B cell (primary cell): ENCODE measurements at regions of chr4 and their contacts with region 1.

Region 1: GRCh38 chr4:147617173-147617840 is at the start of gene TMEM184C:
- DNase-seq: peak; percentile 97
- ATAC-seq: peak; percentile 97
- H3K4me3 ChIP-seq: peak within 1 kb of the TSS; percentile 72 to 92 (median 89)
- H3K4me3 Mint-ChIP-seq: peak within 1 kb of the TSS; percentile 92
- H3K27ac ChIP-seq: peak within 1 kb of the TSS; percentile 77 to 94
- H3K27ac Mint-ChIP-seq: peak within 1 kb of the TSS; percentile 92
- H3K4me1 ChIP-seq: peaks cover 19 to 27% of the 10 kb centered on the region in 2 donors
- H3K4me1 Mint-ChIP-seq: peaks cover 37% of the 10 kb centered on the region
- H3K27me3 ChIP-seq: peaks cover 0 to 4% (median 0%) of the 10 kb centered on the region in 4 experiments
- H3K27me3 Mint-ChIP-seq: peaks cover 8% of the 10 kb centered on the region
- CTCF ChIP-seq: no peak
- total RNA-seq, gene TMEM184C: 25.8 and 27.5 TPM in 2 replicates

Region 2: DNA sequence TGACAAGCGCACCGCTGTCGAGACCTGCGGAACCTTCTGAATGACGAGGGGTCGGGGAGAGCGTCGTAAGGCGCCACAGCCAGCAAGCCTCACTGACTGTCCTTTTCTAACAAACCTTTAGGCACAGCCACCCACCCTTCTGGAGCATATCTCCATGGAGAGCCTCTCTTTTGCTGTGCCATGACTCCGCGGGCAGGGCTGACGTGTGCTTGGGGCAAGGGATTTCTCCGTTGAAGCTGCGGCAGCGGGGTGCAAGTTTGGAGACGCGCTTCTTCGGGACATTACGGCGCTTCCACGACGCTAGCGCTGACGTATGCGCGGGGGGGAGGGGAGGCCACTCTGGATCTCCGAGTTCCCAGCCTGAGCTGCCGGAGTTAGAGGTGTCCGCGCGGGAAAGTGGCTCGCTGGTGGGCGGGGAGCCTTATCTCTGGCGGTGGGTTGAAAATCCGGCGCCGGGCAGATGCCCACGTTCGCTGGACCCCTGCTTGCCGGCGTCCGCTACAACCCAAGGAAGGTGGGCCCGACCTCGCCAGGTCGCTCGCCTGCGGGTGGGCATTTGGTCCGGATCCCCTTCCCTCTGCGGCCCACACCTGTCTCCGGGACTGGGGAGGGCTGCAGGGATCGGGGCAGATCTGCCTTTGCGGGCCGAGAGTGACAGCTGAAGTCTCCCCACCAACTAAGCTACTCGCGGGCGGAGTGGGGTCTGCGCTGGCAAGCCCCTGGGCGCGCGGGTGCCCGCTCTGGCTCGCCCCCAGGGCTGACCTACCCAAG is 1095.0 kb before region 1 on chr4:
- CTCF ChIA-PET with region 1: no interaction called
- POLR2A ChIA-PET with region 1: no interaction called
- intact Hi-C with region 1: loop called (anchors 2 kb)
- DNase-seq: peak; percentile 86
- ATAC-seq: peak; percentile 75
- H3K4me3 ChIP-seq: peak overlapping the region; percentile 61 to 98 (median 96)
- H3K4me3 Mint-ChIP-seq: no peak overlapping the region
- H3K27ac ChIP-seq: peak overlapping the region; percentile 62 to 75
- H3K27ac Mint-ChIP-seq: no peak overlapping the region
- H3K4me1 ChIP-seq: peaks cover 18 to 22% of the 10 kb centered on the region in 2 donors
- H3K4me1 Mint-ChIP-seq: peaks cover 22% of the 10 kb centered on the region
- H3K27me3 ChIP-seq: no peaks in the 10 kb centered on the region
- H3K27me3 Mint-ChIP-seq: no peaks in the 10 kb centered on the region
- CTCF ChIP-seq: no peak

Region 3: DNA sequence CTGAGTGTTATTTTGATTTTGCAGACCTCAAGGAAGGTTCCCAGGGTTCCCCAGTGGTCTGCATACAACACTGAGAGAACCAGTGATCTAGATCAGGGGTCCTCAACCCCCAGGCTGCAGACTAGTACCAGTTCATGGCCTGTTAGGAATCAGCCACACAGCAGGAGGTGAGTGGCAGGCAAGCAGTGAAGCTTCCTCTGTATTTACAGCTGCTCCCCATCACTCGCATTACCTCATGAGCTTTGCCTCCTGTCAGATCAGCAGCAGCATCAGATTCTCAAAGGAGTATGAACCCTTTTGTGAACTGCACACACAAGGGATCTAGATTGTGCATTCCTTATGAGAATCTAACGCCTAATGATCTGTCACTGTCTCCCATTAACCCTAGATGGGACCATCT is 107.9 kb before region 1 on chr4:
- CTCF ChIA-PET with region 1: no interaction called
- POLR2A ChIA-PET with region 1: no interaction called
- intact Hi-C with region 1: no loop called
- DNase-seq: no peak
- ATAC-seq: no peak
- H3K4me3 ChIP-seq: no peak overlapping the region
- H3K4me3 Mint-ChIP-seq: no peak overlapping the region
- H3K27ac ChIP-seq: no peak overlapping the region
- H3K27ac Mint-ChIP-seq: no peak overlapping the region
- H3K4me1 ChIP-seq: no peaks in the 10 kb centered on the region
- H3K4me1 Mint-ChIP-seq: no peaks in the 10 kb centered on the region
- H3K27me3 ChIP-seq: no peaks in the 10 kb centered on the region
- H3K27me3 Mint-ChIP-seq: peaks cover 18% of the 10 kb centered on the region
- CTCF ChIP-seq: no peak

Region 4: DNA sequence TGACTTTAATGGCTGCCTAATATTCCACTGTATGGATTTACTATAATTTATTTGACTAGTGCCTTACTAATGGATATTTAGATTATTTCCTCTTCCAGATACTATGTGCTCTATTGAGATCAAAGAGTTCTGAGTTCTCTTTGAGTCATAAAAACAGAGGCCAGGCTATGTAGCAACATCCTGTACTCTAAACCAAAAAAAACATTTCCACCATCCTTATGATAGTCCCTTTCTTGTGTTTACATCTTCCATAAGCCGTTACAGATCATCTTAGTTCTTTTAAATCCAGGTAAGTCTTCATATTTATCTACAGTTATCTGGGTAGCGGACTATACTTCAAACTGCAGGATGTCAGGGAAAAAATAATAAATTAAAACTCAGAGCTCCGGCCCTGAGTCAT is 56.7 kb before region 1 on chr4:
- CTCF ChIA-PET with region 1: no interaction called
- POLR2A ChIA-PET with region 1: no interaction called
- intact Hi-C with region 1: no loop called
- DNase-seq: no peak
- ATAC-seq: no peak
- H3K4me3 ChIP-seq: no peak overlapping the region
- H3K4me3 Mint-ChIP-seq: no peak overlapping the region
- H3K27ac ChIP-seq: no peak overlapping the region
- H3K27ac Mint-ChIP-seq: no peak overlapping the region
- H3K4me1 ChIP-seq: no peaks in the 10 kb centered on the region
- H3K4me1 Mint-ChIP-seq: no peaks in the 10 kb centered on the region
- H3K27me3 ChIP-seq: peaks cover 0 to 3% (median 0%) of the 10 kb centered on the region in 4 experiments
- H3K27me3 Mint-ChIP-seq: peaks cover 10% of the 10 kb centered on the region
- CTCF ChIP-seq: no peak

Region 5: GRCh38 chr4:147683717-147684700 is 66.7 kb after region 1 on chr4 and contains the start of gene PRMT9:
- CTCF ChIA-PET with region 1: interaction called, 11 read pairs
- POLR2A ChIA-PET with region 1: interaction called, 14 read pairs
- intact Hi-C with region 1: loop called (anchors 1 kb)
- DNase-seq: peak; percentile 89
- ATAC-seq: peak; percentile 98
- H3K4me3 ChIP-seq: peak within 1 kb of the TSS; percentile 79 to 98 (median 90)
- H3K4me3 Mint-ChIP-seq: peak within 1 kb of the TSS; percentile 95
- H3K27ac ChIP-seq: peak within 1 kb of the TSS; percentile 81 to 90
- H3K27ac Mint-ChIP-seq: peak within 1 kb of the TSS; percentile 98
- H3K4me1 ChIP-seq: peaks cover 13 to 18% of the 10 kb centered on the region in 2 donors
- H3K4me1 Mint-ChIP-seq: peaks cover 33% of the 10 kb centered on the region
- H3K27me3 ChIP-seq: no peaks in the 10 kb centered on the region
- H3K27me3 Mint-ChIP-seq: no peaks in the 10 kb centered on the region
- CTCF ChIP-seq: no peak
- total RNA-seq, gene PRMT9: 11.0 and 12.3 TPM in 2 replicates

Region 6: DNA sequence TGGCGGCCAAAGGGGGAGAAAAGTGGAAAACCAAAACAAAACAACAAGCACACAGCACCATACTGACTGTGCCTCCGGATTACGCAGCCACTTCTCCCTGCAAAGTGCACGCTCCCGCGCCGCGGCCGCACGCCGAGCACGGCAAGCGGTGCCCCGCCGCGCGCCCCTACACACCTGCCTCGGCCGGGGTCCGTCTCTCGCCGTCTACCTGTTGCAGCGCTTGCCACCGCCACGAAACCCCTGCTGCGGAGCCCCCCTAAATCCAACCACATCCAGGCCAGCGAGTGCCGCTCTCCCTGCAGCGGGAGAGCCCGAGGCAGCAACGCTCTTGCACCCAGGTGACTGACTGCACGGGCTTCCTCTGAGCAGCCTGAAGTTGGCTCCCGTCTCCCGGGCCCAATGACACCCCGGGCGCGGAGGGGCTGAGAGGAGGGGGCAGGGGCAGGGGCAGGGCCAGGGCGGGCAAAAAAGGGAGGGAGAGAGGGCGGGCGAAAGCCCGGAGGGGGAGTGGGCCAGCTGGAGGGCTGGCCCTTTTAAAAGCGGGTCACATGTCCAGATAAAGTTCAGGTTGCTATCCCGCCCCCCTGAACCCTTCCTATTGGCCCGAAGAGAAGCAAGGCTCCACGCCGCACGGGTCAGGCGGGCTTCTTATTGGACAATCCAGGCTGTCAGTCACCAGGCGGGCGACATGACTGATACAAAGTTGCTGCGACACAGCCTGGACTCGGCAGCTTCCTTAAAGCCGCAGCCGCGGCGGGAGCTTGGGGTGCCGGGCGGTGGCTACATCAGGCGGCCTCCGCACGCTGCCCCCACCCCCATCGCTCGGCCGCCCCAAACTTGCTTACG is 824.9 kb after region 1 on chr4 and contains the start of gene NR3C2:
- CTCF ChIA-PET with region 1: no interaction called
- POLR2A ChIA-PET with region 1: no interaction called
- intact Hi-C with region 1: loop called (anchors 5 kb)
- DNase-seq: peak; percentile 98
- ATAC-seq: peak; percentile 79
- H3K4me3 ChIP-seq: peak within 1 kb of the TSS; percentile 72 to 98 (median 94)
- H3K4me3 Mint-ChIP-seq: peak within 1 kb of the TSS; percentile 95
- H3K27ac ChIP-seq: peak within 1 kb of the TSS; percentile 94
- H3K27ac Mint-ChIP-seq: peak within 1 kb of the TSS; percentile 100
- H3K4me1 ChIP-seq: peaks cover 19 to 29% of the 10 kb centered on the region in 2 donors
- H3K4me1 Mint-ChIP-seq: peaks cover 32% of the 10 kb centered on the region
- H3K27me3 ChIP-seq: peaks cover 0 to 12% (median 6%) of the 10 kb centered on the region in 4 experiments
- H3K27me3 Mint-ChIP-seq: no peaks in the 10 kb centered on the region
- CTCF ChIP-seq: no peak
- total RNA-seq, gene NR3C2: 19.3 and 21.3 TPM in 2 replicates